MCF 10A (cell line): ENCODE measurements at regions of chr3 and their contacts with region 1.

Region 1: DNA sequence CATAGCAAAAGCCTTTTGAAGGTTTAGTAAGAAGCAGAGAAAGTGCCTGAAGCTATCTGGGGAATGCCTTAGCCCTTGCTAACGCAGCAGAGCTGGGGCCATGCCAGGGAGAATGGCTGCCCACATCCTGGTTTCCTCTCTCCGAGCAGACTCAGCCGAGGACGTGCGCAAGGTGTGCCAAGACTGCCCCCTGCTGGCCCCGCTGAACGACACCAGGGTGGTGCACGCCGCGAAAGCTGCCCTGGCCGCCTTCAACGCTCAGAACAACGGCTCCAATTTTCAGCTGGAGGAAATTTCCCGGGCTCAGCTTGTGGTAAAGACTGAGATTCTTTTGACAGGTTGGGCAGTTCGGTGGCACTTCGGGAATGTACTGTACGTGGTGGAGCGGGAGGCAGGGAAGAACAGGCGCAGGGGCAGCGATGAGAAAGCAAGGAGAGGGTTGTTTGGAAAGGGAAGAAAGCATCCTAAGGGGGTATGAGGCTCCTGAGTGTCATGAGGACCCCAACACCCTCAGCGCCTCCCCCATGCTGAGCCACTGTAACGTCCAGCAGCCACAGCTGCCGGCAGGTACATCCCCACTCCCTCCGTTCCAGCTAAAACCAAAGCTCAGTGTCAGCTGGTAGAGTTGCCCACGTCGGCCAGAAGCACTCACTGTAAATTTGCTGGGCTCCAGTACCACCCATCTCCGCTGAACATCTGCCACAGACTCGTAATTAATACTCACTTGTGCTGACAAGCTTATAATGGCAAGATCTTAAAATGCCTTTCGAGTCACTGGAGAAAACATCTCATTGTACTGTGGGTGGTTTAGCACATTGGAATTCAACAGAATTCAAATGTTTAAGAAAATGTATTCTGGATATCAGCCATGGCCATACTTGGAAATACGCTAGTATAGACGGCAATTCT is 4.4 kb downstream of the AHSG start:
- DNase-seq: peak; percentile 99
- H3K4me3 Mint-ChIP-seq: peak overlapping the region; percentile 72
- H3K27ac Mint-ChIP-seq: peak overlapping the region; percentile 71
- H3K4me1 Mint-ChIP-seq: peaks cover 25% of the 10 kb centered on the region
- H3K27me3 Mint-ChIP-seq: no peaks in the 10 kb centered on the region
- CTCF ChIP-seq: peak; percentile 85

Region 2: DNA sequence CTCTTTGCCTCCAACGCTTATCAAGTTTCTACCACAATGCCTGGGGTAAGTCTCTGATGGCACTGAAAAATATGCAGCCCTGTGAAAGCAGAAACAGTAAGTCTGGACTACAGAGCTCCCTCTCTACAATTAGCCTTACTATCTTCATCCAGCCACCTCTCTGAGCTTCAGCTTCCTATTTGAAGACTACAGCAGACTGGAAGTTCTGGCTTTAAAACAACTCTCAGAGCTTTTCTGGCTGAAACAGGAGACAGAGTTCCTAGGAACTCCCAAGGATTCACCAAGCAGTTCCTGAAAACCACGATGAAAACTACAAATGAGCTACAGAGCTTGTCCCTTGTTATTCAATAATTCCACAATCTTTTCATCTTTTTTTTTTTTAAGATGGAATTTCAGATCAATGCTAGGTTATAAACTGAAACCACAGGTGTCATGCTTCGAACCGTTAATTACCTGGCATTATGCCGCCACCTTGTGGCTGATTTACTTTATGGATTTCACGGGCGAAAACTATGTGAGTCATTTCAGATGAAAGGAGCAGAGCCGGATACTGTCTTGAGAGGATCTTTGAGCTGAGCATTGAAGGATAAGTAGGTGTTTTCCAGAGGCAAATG is 77.0 kb before region 1 on chr3:
- CTCF ChIA-PET with region 1: interaction called, 8 read pairs
- POLR2A ChIA-PET with region 1: interaction called, 3 read pairs
- intact Hi-C with region 1: loop called (anchors 2 kb)
- DNase-seq: peak; percentile 89
- H3K4me3 Mint-ChIP-seq: no peak overlapping the region
- H3K27ac Mint-ChIP-seq: no peak overlapping the region
- H3K4me1 Mint-ChIP-seq: peaks cover 13% of the 10 kb centered on the region
- H3K27me3 Mint-ChIP-seq: no peaks in the 10 kb centered on the region
- CTCF ChIP-seq: peak; percentile 71

Region 3: GRCh38 chr3:186598108-186598784 is 19.0 kb before region 1 on chr3:
- CTCF ChIA-PET with region 1: interaction called, 100 read pairs
- POLR2A ChIA-PET with region 1: interaction called, 6 read pairs
- intact Hi-C with region 1: no loop called
- DNase-seq: peak; percentile 57
- H3K4me3 Mint-ChIP-seq: no peak overlapping the region
- H3K27ac Mint-ChIP-seq: no peak overlapping the region
- H3K4me1 Mint-ChIP-seq: peaks cover 27% of the 10 kb centered on the region
- H3K27me3 Mint-ChIP-seq: no peaks in the 10 kb centered on the region
- CTCF ChIP-seq: no peak

Region 4: GRCh38 chr3:186754006-186754405 is 136.7 kb after region 1 on chr3:
- CTCF ChIA-PET with region 1: interaction called, 61 read pairs
- POLR2A ChIA-PET with region 1: interaction called, 18 read pairs
- intact Hi-C with region 1: loop called (anchors 1 kb)
- DNase-seq: peak; percentile 55
- H3K4me3 Mint-ChIP-seq: peak overlapping the region; percentile 71
- H3K27ac Mint-ChIP-seq: peak overlapping the region; percentile 97
- H3K4me1 Mint-ChIP-seq: peaks cover 13% of the 10 kb centered on the region
- H3K27me3 Mint-ChIP-seq: no peaks in the 10 kb centered on the region
- CTCF ChIP-seq: no peak

Region 5: GRCh38 chr3:186798239-186798874 is 181.1 kb after region 1 on chr3:
- CTCF ChIA-PET with region 1: interaction called, 12 read pairs
- POLR2A ChIA-PET with region 1: no interaction called
- intact Hi-C with region 1: no loop called
- DNase-seq: no peak
- H3K4me3 Mint-ChIP-seq: no peak overlapping the region
- H3K27ac Mint-ChIP-seq: no peak overlapping the region
- H3K4me1 Mint-ChIP-seq: peaks cover 6% of the 10 kb centered on the region
- H3K27me3 Mint-ChIP-seq: no peaks in the 10 kb centered on the region
- CTCF ChIP-seq: no peak

Region 6: DNA sequence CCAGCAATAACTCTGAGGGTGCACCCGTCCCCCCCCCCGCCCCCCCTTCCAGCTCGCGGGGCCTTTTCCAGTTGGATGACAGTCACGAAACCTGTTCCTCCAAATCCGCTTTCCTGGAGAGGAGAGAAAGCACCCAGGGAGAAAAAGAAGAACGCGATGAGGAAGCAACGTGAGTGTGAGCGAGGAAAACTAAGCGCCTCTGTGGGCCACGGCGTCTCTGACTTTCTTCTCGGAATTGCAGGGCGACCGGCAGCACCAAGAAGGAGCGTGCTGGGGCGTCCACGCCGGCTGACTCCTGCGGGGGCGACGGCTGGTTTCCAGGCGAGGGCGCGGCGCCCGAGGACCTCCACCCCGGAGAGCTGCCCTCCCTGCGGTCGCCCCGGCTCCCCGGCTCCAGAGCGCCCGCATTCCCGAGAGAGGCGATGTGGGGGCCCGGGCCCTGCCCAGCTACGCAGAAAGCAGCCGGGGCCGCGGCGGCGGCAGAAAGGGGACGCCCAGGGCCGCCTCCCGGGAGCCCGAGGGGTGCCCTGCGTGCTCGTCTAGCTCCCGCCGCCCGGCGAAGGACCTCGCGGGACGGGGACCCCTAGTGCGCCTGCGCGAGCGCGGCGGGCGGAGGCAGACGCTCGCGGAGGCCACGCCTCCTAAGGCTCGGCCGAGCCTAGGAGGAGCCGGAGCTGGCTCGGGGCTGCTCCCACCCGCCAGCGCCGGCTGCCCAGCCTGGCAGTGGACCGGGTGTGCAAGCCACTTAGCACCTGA is 209.9 kb after region 1 on chr3:
- CTCF ChIA-PET with region 1: interaction called, 96 read pairs
- POLR2A ChIA-PET with region 1: interaction called, 10 read pairs
- intact Hi-C with region 1: no loop called
- DNase-seq: peak; percentile 88
- H3K4me3 Mint-ChIP-seq: peak overlapping the region; percentile 73
- H3K27ac Mint-ChIP-seq: no peak overlapping the region
- H3K4me1 Mint-ChIP-seq: peaks cover 12% of the 10 kb centered on the region
- H3K27me3 Mint-ChIP-seq: peaks cover 43% of the 10 kb centered on the region
- CTCF ChIP-seq: no peak